Breast epithelium (tissue), 4 donors: ENCODE measurements at regions of chr9 and their contacts with region 1.

Region 1: GRCh38 chr9:109119439-109120203 is at the start of gene TMEM245:
- DNase-seq: peak; percentile 95
- H3K4me3 ChIP-seq: peak within 1 kb of the TSS; percentile 78 to 92 (median 80)
- H3K27ac ChIP-seq: peak within 1 kb of the TSS; percentile 79 to 87
- H3K4me1 ChIP-seq: peaks cover 0 to 8% of the 10 kb centered on the region in 2 donors
- H3K27me3 ChIP-seq: no peaks in the 10 kb centered on the region
- CTCF ChIP-seq: no peak
- POLR2A ChIP-seq: peak; percentile 67
- total RNA-seq, gene TMEM245: 47.5 to 95.7 (median 74.9) TPM

Region 2: GRCh38 chr9:109001275-109001676 is 118.3 kb before region 1 on chr9:
- intact Hi-C with region 1: loop called (anchors 10 kb)
- DNase-seq: no peak
- H3K4me3 ChIP-seq: no peak overlapping the region
- H3K27ac ChIP-seq: no peak overlapping the region
- H3K4me1 ChIP-seq: no peaks in the 10 kb centered on the region
- H3K27me3 ChIP-seq: no peaks in the 10 kb centered on the region
- CTCF ChIP-seq: no peak
- POLR2A ChIP-seq: no peak

Region 3: GRCh38 chr9:109861499-109861898 is 741.9 kb after region 1 on chr9:
- intact Hi-C with region 1: loop called (anchors 5 kb)
- DNase-seq: no peak
- H3K4me3 ChIP-seq: no peak overlapping the region
- H3K27ac ChIP-seq: peak overlapping the region; percentile 10 to 62
- H3K4me1 ChIP-seq: no peaks in the 10 kb centered on the region
- H3K27me3 ChIP-seq: no peaks in the 10 kb centered on the region
- CTCF ChIP-seq: no peak
- POLR2A ChIP-seq: no peak